Calu3 (cell line): ENCODE measurements at regions of chr4 and their contacts with region 1.

Region 1: DNA sequence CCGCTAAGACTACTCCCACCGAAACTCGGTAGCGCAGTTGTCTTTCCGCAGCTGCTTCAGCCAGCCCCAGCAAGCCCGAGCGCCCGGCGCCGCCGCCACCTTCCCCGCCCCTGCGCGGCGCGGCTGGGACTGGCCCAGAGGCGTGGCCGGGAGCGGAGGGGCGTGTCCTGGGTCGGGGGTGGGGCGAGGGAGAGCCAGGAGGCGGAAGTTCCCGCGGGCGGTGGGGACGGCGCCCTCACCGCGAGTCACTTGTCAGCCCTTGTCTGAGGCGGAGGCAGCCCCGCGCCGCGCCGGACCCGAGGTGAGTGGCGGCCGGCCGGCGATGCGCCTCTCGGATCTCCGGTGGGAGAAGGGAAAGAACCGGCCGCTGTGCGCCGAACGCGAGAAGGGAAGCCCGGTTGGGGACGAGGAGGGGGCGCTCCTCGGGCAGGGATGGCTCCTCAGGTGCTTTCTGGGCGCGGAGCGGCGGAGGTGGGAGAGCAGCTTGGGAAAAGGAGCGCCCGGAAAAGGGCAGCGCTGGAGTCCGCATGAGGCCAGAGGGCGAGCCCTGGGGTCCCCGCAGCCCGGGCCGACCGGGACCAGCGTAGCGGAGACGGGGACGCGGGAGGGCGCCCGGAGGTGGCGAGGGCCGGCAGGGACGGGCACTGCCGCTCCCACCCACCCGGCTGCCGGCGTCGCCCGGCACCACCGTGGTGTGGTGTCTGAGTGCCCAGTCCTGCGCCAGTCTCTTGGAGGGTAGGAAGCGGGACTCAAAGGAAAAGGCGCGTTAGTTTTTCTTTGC is at the start of gene PDLIM5:
- DNase-seq: peak; percentile 88
- H3K4me3 Mint-ChIP-seq: peak within 1 kb of the TSS; percentile 82
- H3K27ac Mint-ChIP-seq: peak within 1 kb of the TSS; percentile 96
- H3K4me1 Mint-ChIP-seq: peaks cover 23% of the 10 kb centered on the region
- H3K27me3 Mint-ChIP-seq: no peaks in the 10 kb centered on the region
- CTCF ChIP-seq: no peak
- total RNA-seq, gene PDLIM5: 122 and 129 TPM in 2 replicates

Region 2: GRCh38 chr4:94036964-94037363 is 414.9 kb before region 1 on chr4:
- CTCF ChIA-PET with region 1: no interaction called
- intact Hi-C with region 1: no loop called
- DNase-seq: no peak
- H3K4me3 Mint-ChIP-seq: no peak overlapping the region
- H3K27ac Mint-ChIP-seq: no peak overlapping the region
- H3K4me1 Mint-ChIP-seq: no peaks in the 10 kb centered on the region
- H3K27me3 Mint-ChIP-seq: no peaks in the 10 kb centered on the region
- CTCF ChIP-seq: no peak

Region 3: GRCh38 chr4:94412658-94413038 is 39.2 kb before region 1 on chr4:
- CTCF ChIA-PET with region 1: no interaction called
- intact Hi-C with region 1: loop called (anchors 2 kb)
- DNase-seq: peak; percentile 6
- H3K4me3 Mint-ChIP-seq: peak overlapping the region; percentile 54
- H3K27ac Mint-ChIP-seq: peak overlapping the region; percentile 81
- H3K4me1 Mint-ChIP-seq: peaks cover 35% of the 10 kb centered on the region
- H3K27me3 Mint-ChIP-seq: no peaks in the 10 kb centered on the region
- CTCF ChIP-seq: no peak

Region 4: DNA sequence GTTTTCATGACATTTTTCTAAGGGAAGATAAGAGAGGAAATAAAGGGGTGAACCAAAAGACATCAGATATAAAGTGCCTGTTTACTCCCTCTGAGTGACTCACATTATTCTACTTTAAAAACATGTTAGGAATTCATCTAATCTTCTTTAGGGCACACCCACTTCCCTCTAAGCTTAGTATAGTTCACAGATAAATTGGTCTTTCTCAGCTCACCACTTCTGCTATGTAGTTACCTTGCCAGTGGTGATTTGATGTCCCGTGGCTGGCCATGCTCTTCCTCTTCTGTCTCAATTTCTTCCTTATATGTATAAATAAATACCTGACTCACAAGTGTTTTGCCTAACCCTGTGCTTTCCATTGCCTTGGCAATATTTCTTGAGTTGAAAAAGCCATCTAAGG is 96.7 kb after region 1 on chr4:
- CTCF ChIA-PET with region 1: interaction called, 3 read pairs
- intact Hi-C with region 1: loop called (anchors 5 kb)
- DNase-seq: peak; percentile 51
- H3K4me3 Mint-ChIP-seq: peak overlapping the region; percentile 39
- H3K27ac Mint-ChIP-seq: peak overlapping the region; percentile 93
- H3K4me1 Mint-ChIP-seq: peaks cover 33% of the 10 kb centered on the region
- H3K27me3 Mint-ChIP-seq: no peaks in the 10 kb centered on the region
- CTCF ChIP-seq: no peak